ENCODE measurements at regions of chr12 and their contacts with region 1.

Region 1: GRCh38 chr12:66087365-66087943 is 43.1 kb downstream of the LLPH start:
- DNase-seq: peak; percentile 65
- H3K4me3 Mint-ChIP-seq: no peak overlapping the region
- H3K27ac Mint-ChIP-seq: no peak overlapping the region
- H3K4me1 Mint-ChIP-seq: no peaks in the 10 kb centered on the region
- H3K27me3 Mint-ChIP-seq: peaks cover 14% of the 10 kb centered on the region

Region 2: GRCh38 chr12:65602610-65603295 is 484.7 kb before region 1 on chr12:
- CTCF ChIA-PET with region 1: interaction called, 3 read pairs
- POLR2A ChIA-PET with region 1: no interaction called
- intact Hi-C with region 1: loop called (anchors 5 kb)
- DNase-seq: peak; percentile 56
- H3K4me3 Mint-ChIP-seq: no peak overlapping the region
- H3K27ac Mint-ChIP-seq: no peak overlapping the region
- H3K4me1 Mint-ChIP-seq: peaks cover 1% of the 10 kb centered on the region
- H3K27me3 Mint-ChIP-seq: peaks cover 5% of the 10 kb centered on the region

Region 3: GRCh38 chr12:65823513-65824375 is 263.7 kb before region 1 on chr12:
- CTCF ChIA-PET with region 1: no interaction called
- POLR2A ChIA-PET with region 1: no interaction called
- intact Hi-C with region 1: loop called (anchors 10 kb)
- DNase-seq: peak; percentile 9
- H3K4me3 Mint-ChIP-seq: peak overlapping the region; percentile 33
- H3K27ac Mint-ChIP-seq: no peak overlapping the region
- H3K4me1 Mint-ChIP-seq: peaks cover 12% of the 10 kb centered on the region
- H3K27me3 Mint-ChIP-seq: peaks cover 49% of the 10 kb centered on the region

Region 4: DNA sequence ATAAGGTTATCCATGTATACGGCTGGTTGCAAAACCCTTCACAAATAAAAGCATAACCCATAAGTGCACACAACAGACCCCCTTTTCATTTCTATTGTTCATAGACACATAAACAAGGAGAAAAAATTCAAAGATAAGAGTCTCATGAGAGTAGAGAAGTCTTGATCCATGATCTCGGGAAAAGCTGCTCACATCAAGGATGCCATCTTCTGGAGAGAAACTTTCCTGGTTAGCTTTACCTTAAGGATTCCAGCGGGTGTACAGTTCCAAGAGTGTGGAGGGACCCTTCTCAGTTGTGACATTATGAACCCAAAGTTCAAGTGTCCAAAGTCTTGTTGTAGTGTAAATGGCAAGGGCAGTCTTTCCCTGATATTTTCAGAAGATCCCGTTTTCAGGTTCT is 101.4 kb before region 1 on chr12:
- CTCF ChIA-PET with region 1: no interaction called
- POLR2A ChIA-PET with region 1: no interaction called
- intact Hi-C with region 1: loop called (anchors 1 kb)
- DNase-seq: no peak
- H3K4me3 Mint-ChIP-seq: no peak overlapping the region
- H3K27ac Mint-ChIP-seq: no peak overlapping the region
- H3K4me1 Mint-ChIP-seq: no peaks in the 10 kb centered on the region
- H3K27me3 Mint-ChIP-seq: no peaks in the 10 kb centered on the region

Measured in activated CD4-positive, alpha-beta memory T cell treated with anti-CD3 and anti-CD28 coated beads for 36 hours (primary cell).